B cell (primary cell): ENCODE measurements at regions of chr15 and their contacts with region 1.

Region 1: DNA sequence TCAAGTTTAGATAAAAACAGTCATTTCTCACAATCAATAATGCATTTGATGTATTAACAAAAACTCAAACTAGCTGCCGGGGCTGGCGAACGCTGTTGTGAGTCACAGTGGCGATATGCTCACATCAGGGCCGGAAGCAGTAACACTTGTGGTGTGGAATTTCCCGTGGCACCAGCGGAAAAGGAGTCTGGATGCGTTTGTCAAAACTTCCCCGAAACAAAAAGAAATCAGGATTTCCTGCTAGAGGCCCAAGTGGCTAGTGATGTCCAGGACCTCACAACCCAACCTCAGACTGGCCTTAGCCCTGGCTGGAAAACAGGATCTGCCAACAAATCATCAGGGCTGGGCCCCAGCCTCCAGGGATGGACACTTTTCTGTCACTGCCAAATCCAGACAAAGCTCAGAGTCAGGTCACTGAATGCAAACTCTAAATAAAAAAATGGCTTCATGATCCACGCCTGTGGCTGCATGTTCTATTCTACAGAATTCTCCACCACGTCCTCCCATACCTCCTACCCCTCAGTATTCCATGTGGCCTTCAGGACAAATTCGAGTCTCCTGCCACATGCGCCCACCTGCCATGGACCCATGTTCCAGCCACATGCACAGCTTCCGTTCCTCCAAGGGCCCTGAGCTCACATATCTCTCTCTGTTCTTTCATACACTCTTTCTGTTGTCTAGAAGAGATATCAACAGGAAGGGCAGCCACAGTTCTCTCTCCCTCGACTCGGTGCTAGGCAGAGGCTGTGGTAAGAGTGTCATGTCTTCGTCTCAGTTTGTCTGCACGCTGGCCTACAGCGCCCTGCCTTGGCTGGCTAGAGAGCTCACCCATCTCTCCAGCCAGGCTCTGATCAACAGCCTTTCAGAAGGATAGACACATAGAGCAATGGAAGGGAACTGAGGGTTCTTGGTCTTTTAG is 35.4 kb downstream of the EHD4 start:
- DNase-seq: peak; percentile 41
- ATAC-seq: peak; percentile 70
- H3K4me3 ChIP-seq: no peak overlapping the region
- H3K4me3 Mint-ChIP-seq: no peak overlapping the region
- H3K27ac ChIP-seq: peak overlapping the region; percentile 20 to 78
- H3K27ac Mint-ChIP-seq: peak overlapping the region; percentile 82
- H3K4me1 ChIP-seq: peaks cover 17 to 35% of the 10 kb centered on the region in 2 donors
- H3K4me1 Mint-ChIP-seq: peaks cover 34% of the 10 kb centered on the region
- H3K27me3 ChIP-seq: no peaks in the 10 kb centered on the region
- H3K27me3 Mint-ChIP-seq: no peaks in the 10 kb centered on the region
- CTCF ChIP-seq: no peak

Region 2: GRCh38 chr15:41923401-41923997 is 13.4 kb before region 1 on chr15:
- CTCF ChIA-PET with region 1: interaction called, 7 read pairs
- POLR2A ChIA-PET with region 1: interaction called, 3 read pairs
- intact Hi-C with region 1: loop called (anchors 2 kb)
- DNase-seq: peak; percentile 50
- ATAC-seq: peak; percentile 42
- H3K4me3 ChIP-seq: no peak overlapping the region
- H3K4me3 Mint-ChIP-seq: peak overlapping the region; percentile 26
- H3K27ac ChIP-seq: peak overlapping the region in 1 of 2 donors; percentile 75
- H3K27ac Mint-ChIP-seq: peak overlapping the region; percentile 77
- H3K4me1 ChIP-seq: peaks cover 43 to 49% of the 10 kb centered on the region in 2 donors
- H3K4me1 Mint-ChIP-seq: peaks cover 68% of the 10 kb centered on the region
- H3K27me3 ChIP-seq: no peaks in the 10 kb centered on the region
- H3K27me3 Mint-ChIP-seq: no peaks in the 10 kb centered on the region
- CTCF ChIP-seq: no peak